ENCODE measurements at regions of chr17 and their contacts with region 1.

Region 1: GRCh38 chr17:44141717-44142285 is at the start of gene HROB:
- DNase-seq: peak; percentile 97
- total RNA-seq, gene HROB: 0.65 TPM

Region 2: GRCh38 chr17:43927060-43927864 is 214.5 kb before region 1 on chr17:
- intact Hi-C with region 1: no loop called
- DNase-seq: no peak

Region 3: GRCh38 chr17:44123356-44124117 is 18.3 kb before region 1 on chr17 and contains the start of gene HDAC5:
- intact Hi-C with region 1: loop called (anchors 1 kb)
- DNase-seq: peak; percentile 99
- total RNA-seq, gene HDAC5: 75.5 TPM

Region 4: GRCh38 chr17:44324571-44325275 is 182.9 kb after region 1 on chr17 and contains the start of gene SLC25A39:
- intact Hi-C with region 1: loop called (anchors 2 kb)
- DNase-seq: peak; percentile 99
- total RNA-seq, gene SLC25A39: 53.4 TPM